Spleen (tissue), 13 donors: ENCODE measurements at regions of chr5 and their contacts with region 1.

Region 1: DNA sequence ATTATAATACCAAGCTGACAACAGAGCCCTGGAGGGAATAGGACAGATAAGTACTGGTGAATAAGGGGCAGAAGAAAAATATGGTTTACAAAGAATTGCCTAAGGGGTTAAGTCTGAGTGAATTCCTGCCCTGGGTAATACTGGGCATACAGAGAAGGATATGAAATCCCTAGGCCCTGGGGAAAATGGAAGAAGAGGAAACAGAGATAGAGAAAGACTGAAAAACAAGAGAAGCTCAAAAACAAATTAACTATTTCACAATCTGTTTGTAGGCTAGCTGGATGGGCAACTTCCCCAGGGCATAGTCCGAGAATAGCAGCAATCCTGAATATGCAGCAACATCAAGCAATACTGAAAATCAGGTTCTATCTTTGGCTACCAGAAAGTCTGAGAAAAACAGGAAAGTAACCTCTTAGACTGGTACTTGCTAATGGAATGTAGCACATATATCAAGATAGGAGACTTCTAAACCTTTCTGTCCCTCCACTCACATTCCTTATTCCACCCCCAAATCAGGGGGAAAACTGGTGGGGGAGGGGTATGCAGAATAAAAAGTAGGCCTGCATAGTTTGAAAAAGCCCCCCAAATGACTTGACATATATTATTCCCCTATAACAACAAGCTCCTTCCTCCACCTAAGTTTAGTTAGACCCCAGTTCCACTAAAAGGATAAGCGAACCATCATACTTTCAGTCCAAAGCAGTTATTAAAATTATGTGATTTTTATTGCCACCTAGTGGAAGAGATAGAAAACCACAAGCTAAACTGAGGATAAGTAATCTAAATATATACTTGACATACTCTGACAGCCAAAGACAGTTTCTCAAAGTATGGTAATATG is 20.6 kb downstream of the SLC38A9 start:
- DNase-seq: no peak
- H3K4me3 ChIP-seq: no peak overlapping the region
- H3K27ac ChIP-seq: no peak overlapping the region
- H3K4me1 ChIP-seq: peaks cover 0 to 25% (median 6%) of the 10 kb centered on the region in 6 donors
- H3K27me3 ChIP-seq: no peaks in the 10 kb centered on the region
- CTCF ChIP-seq: peak; percentile 36 to 72 (median 62)
- POLR2A ChIP-seq: no peak

Region 2: GRCh38 chr5:55344392-55344992 is 347.0 kb before region 1 on chr5:
- intact Hi-C with region 1: loop called (anchors 10 kb)
- DNase-seq: no peak
- H3K4me3 ChIP-seq: no peak overlapping the region
- H3K27ac ChIP-seq: no peak overlapping the region
- H3K4me1 ChIP-seq: peaks cover 0 to 2% (median 0%) of the 10 kb centered on the region in 6 donors
- H3K27me3 ChIP-seq: no peaks in the 10 kb centered on the region
- CTCF ChIP-seq: peak; percentile 58 to 89 (median 80)
- POLR2A ChIP-seq: no peak